ENCODE measurements at regions of chr6 and their contacts with region 1.

Region 1: GRCh38 chr6:29752451-29753308 is 29.4 kb downstream of the HLA-F start:
- DNase-seq: peak; percentile 66 to 86 (median 76)
- H3K4me3 ChIP-seq: peak overlapping the region; percentile 37 to 81 (median 67)
- H3K27ac ChIP-seq: peak overlapping the region in 55 of 59 donors; percentile 19 to 91 (median 74)
- H3K27me3 ChIP-seq: peaks cover 0 to 30% (median 7%) of the 10 kb centered on the region in 45 donors
- CTCF ChIP-seq: peak; percentile 37 to 96 (median 87)

Region 2: DNA sequence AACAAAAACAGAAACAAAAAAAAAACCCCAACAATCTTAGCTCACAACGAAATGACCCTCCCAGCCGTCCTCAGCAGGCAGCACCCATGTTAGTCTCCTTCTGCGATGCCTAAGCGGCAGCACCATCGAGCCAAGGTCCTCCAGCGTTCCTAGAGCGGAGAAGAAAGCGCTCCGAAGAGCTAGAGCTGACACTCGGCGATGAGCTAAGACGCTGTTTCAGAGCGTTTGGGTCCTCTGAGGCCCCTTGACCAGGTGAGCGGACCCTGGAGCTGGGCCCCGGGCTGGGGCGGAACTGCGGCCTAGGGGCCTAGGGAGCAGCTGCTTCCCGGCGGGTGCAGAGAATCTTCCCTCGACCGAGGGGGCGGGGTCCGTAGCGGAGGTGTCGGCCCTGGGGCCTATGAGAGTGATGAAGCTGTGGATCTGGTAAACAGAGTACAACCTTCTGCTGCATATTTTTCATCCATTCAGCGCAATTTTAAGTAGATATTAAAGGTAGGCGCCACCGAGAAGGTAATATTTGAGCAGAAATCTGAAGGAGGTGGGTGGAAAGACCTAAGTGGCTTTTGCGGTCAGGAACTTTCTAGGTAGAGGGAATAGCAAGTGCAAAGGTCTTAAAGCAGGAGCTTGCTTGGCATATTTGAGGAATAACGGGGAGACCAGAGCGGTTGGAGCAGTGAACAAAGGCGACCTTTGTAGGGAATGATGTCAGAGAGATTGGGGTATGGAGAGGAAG is 1485.6 kb before region 1 on chr6 and contains the start of gene ZSCAN26:
- intact Hi-C with region 1: no loop called
- DNase-seq: peak; percentile 50 to 88 (median 84)
- H3K4me3 ChIP-seq: peak within 1 kb of the TSS; percentile 55 to 99 (median 85)
- H3K27ac ChIP-seq: peak within 1 kb of the TSS; percentile 61 to 98 (median 91)
- H3K27me3 ChIP-seq: no peaks in the 10 kb centered on the region
- CTCF ChIP-seq: peak in 20 of 56 donors; percentile 5 to 45 (median 20)
- total RNA-seq, gene ZSCAN26: 22.8 to 52.6 (median 35.5) TPM

Region 3: GRCh38 chr6:29509239-29509638 is 243.4 kb before region 1 on chr6:
- intact Hi-C with region 1: no loop called
- DNase-seq: no peak
- H3K4me3 ChIP-seq: no peak overlapping the region
- H3K27ac ChIP-seq: no peak overlapping the region
- H3K27me3 ChIP-seq: peaks cover 0 to 18% (median 0%) of the 10 kb centered on the region in 45 donors
- CTCF ChIP-seq: no peak

Region 4: DNA sequence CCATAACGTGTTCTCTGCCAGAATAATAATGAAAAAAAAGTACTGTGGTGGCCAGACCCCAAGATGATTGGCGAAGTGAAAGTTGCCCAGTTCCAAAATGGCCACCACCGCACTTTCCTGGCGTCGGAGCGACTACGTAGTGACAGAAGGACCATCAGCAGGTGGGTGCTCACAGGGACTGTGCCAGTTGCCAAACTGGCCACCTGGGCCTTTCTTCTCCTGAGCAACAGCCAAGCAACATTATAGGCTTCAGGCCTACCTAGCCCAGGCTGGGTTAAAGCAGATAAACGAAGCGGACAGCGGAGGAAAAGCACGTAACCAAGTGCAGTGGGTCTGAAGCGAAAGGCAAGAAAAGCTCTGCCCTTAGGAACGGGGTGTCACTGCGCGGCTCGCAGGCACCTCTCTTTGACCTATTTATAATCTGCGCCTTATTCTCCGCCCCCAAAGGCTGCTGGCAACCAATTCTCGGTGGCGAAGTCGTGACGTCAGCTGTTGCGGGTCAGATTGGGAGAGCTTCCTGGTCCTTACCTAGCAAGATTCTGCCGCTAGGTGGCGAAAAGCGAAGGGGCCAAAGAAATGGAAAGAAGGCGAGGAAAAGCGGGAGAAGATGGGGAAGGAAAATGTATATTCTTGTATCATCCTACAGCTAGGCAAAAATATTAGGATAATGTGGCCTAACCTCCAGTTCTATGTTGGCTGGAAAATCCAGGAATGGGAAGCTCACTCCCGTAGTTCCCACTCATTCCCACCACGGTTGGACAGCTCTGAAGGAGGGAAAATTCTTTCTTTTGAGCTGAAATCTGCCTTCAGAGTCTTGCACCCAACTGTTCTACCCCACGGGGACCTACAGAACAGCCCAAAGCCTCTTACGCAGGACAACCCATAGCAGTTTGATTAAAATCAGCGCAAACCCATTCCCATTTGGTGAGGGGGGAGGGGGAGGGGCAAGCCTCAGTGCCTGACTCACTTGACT is 102.7 kb before region 1 on chr6:
- intact Hi-C with region 1: loop called (anchors 10 kb)
- DNase-seq: peak; percentile 97 to 100 (median 98)
- H3K4me3 ChIP-seq: peak overlapping the region; percentile 41 to 87 (median 68)
- H3K27ac ChIP-seq: peak overlapping the region; percentile 55 to 99 (median 94)
- H3K27me3 ChIP-seq: peaks cover 0 to 4% (median 0%) of the 10 kb centered on the region in 45 donors
- CTCF ChIP-seq: peak; percentile 85 to 98 (median 94)

Region 5: GRCh38 chr6:29705389-29706231 is 47.1 kb before region 1 on chr6:
- intact Hi-C with region 1: loop called in 1 of 2 experiments (anchors 2 kb)
- DNase-seq: peak in 2 of 10 donors; percentile 37 to 45
- H3K4me3 ChIP-seq: no peak overlapping the region
- H3K27ac ChIP-seq: no peak overlapping the region
- H3K27me3 ChIP-seq: peaks cover 0 to 37% (median 5%) of the 10 kb centered on the region in 45 donors
- CTCF ChIP-seq: peak in 55 of 56 donors; percentile 29 to 86 (median 71)

Region 6: GRCh38 chr6:29809249-29809648 is 56.6 kb after region 1 on chr6:
- intact Hi-C with region 1: no loop called
- DNase-seq: no peak
- H3K4me3 ChIP-seq: no peak overlapping the region
- H3K27ac ChIP-seq: no peak overlapping the region
- H3K27me3 ChIP-seq: peaks cover 0 to 19% (median 0%) of the 10 kb centered on the region in 45 donors
- CTCF ChIP-seq: no peak

Region 7: GRCh38 chr6:29834564-29835436 is 82.1 kb after region 1 on chr6:
- intact Hi-C with region 1: loop called in 1 of 2 experiments (anchors 10 kb)
- DNase-seq: peak in 2 of 10 donors; percentile 36 to 48
- H3K4me3 ChIP-seq: peak overlapping the region in 1 of 59 donors; percentile 12
- H3K27ac ChIP-seq: no peak overlapping the region
- H3K27me3 ChIP-seq: peaks cover 0 to 72% (median 20%) of the 10 kb centered on the region in 45 donors
- CTCF ChIP-seq: peak; percentile 52 to 94 (median 84)

Region 8: GRCh38 chr6:29887819-29888776 is 135.4 kb after region 1 on chr6:
- intact Hi-C with region 1: no loop called
- DNase-seq: peak in 9 of 10 donors; percentile 30 to 65 (median 42)
- H3K4me3 ChIP-seq: peak overlapping the region; percentile 28 to 81 (median 65)
- H3K27ac ChIP-seq: peak overlapping the region in 49 of 59 donors; percentile 11 to 90 (median 70)
- H3K27me3 ChIP-seq: peaks cover 0 to 9% (median 0%) of the 10 kb centered on the region in 45 donors
- CTCF ChIP-seq: peak in 1 of 56 donors; percentile 3

Region 9: DNA sequence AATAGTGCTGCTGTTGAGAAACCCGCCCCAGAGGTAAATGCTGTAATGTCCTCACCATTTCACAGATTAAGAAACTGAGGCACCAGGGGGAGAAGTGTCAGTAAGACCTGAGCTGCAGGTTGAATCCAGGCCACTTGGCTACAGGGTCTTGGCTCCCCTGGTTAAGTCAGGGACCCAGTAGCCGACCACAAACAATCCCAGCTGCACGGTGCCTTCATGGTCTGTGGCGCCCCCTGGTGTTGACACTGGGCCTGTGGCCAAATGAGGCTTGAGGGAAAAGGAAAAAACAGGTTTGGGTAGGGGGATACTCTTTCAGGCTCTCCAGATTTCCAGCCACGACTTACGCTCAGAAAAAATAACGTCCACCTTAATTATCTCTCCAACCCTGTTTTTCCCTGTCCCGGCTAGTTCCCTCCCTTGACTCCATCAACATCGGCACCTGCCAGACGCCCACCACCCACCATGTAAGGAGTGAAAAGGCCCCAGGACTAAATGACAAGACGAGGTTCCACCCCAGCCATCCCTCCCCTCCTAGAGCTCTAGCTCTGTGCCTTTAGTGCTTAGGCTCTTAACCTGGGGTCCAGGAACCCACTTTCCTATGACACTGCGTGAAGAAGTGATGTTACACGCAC is 260.7 kb after region 1 on chr6:
- intact Hi-C with region 1: loop called in 1 of 2 experiments (anchors 10 kb)
- DNase-seq: peak in 1 of 10 donors; percentile 56
- H3K4me3 ChIP-seq: no peak overlapping the region
- H3K27ac ChIP-seq: no peak overlapping the region
- H3K27me3 ChIP-seq: peaks cover 0 to 22% (median 8%) of the 10 kb centered on the region in 45 donors
- CTCF ChIP-seq: peak; percentile 37 to 97 (median 86)

Region 10: DNA sequence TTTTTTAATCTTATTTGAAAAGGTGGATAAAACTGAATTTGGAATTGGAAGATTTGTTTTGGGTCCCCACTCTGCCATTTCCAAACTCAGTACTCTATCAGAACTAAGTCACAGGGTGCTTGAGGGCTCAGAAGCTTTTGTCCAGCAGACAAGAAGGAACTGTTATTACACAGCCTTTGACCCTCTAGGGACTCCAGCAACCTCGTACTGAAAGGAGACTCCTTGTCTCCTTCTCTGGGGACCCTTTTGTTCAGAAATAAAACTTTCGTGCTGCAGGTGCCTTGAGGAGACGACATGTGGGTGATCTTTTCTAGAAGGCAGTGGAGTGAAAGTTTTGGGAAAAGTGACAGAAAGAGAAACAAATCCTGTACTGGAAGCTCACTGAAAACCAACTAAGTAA is 301.0 kb after region 1 on chr6:
- intact Hi-C with region 1: loop called in 1 of 2 experiments (anchors 10 kb)
- DNase-seq: no peak
- H3K4me3 ChIP-seq: no peak overlapping the region
- H3K27ac ChIP-seq: peak overlapping the region in 1 of 59 donors; percentile 13
- H3K27me3 ChIP-seq: no peaks in the 10 kb centered on the region
- CTCF ChIP-seq: no peak